ENCODE measurements at regions of chr10 and their contacts with region 1.

Region 1: DNA sequence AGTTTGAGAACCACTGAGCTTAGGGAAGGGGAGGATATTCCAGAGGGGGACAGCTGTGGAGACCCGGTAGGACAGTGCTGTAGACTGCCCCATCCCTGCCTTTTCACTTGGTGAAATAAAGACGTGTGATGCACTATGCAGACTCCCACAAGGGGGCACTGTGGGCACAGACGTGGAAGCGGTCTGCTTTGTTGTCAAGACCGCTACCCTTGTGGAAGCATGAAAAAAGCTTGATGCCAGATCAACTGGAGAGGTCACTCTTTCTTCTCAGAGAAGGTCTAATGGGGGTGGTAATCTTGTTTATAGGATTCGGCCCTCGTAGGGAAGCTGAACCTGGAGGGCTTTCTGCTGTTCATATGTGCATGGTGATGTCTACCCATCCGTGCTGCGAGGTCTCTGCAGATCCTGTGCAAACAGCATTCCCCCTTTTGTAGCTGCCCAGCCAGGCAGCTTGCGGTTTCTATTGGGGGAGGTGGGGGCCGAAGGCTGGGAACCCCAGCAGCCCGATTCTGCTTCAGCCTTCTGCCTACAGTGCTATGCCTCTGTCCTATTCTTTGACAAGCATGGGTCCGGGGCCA is 13.7 kb downstream of the RPS24 start:
- DNase-seq: peak; percentile 90
- H3K4me3 ChIP-seq: no peak overlapping the region
- H3K27ac ChIP-seq: peak overlapping the region; percentile 16
- H3K4me1 ChIP-seq: peaks cover 18% of the 10 kb centered on the region
- H3K27me3 ChIP-seq: no peaks in the 10 kb centered on the region
- CTCF ChIP-seq: peak; percentile 93

Region 2: DNA sequence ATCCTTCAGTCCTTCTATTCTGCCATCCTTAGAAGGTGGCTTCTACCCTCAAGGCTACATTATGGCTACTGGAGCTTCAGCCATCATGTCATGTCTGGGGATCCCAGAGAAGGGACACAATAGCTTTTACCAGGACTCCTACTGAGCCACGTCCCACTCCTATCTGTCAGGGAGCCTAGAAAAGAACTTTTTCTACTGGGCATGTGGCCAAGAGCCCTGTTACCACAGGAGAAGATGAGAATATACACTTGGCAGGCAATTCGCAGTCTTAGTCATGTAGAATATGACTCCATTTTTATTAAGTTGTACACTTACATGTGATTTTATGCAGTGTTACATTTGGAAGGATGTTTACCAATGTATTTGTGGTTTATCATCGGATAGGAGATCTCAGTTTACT is 345.2 kb before region 1 on chr10:
- CTCF ChIA-PET with region 1: no interaction called
- POLR2A ChIA-PET with region 1: no interaction called
- intact Hi-C with region 1: no loop called
- DNase-seq: peak; percentile 79
- H3K4me3 ChIP-seq: no peak overlapping the region
- H3K27ac ChIP-seq: no peak overlapping the region
- H3K4me1 ChIP-seq: no peaks in the 10 kb centered on the region
- H3K27me3 ChIP-seq: no peaks in the 10 kb centered on the region
- CTCF ChIP-seq: no peak

Region 3: DNA sequence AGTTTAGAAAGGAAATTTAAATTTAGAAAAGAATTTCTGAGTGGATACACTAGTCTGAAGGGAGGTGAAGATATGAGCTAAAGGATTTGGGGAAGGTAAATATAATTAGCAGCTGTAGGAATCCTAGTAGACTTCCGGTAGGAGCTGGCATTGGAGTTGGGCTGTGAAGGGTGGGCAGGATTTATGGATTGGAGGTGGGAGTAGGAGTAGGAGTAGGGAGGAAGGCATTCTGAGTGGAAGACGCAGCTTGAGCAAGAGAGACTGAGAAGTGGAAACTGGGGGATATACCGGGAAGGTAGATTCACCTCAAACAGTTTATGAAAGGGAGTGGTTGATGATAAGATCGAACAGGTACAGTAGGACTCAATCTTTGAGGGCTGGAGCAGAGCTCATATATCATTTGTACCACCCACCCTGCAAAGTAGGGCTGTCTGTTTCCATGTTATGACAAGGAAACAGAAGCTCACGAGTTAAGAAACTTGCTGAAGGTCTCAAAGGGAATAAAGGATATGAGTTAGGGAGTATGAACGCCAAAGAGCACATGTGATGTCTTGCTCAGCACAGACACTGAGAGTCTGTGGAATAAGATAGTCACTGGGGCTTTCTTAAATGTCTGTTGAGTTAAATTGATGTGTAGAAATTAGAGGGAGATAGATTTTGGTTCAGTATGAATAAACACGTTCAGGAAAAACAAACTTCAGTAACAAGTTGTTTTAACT is 67.9 kb after region 1 on chr10:
- CTCF ChIA-PET with region 1: no interaction called
- POLR2A ChIA-PET with region 1: no interaction called
- intact Hi-C with region 1: no loop called
- DNase-seq: no peak
- H3K4me3 ChIP-seq: no peak overlapping the region
- H3K27ac ChIP-seq: no peak overlapping the region
- H3K4me1 ChIP-seq: no peaks in the 10 kb centered on the region
- H3K27me3 ChIP-seq: peaks cover 4% of the 10 kb centered on the region
- CTCF ChIP-seq: no peak

Region 4: DNA sequence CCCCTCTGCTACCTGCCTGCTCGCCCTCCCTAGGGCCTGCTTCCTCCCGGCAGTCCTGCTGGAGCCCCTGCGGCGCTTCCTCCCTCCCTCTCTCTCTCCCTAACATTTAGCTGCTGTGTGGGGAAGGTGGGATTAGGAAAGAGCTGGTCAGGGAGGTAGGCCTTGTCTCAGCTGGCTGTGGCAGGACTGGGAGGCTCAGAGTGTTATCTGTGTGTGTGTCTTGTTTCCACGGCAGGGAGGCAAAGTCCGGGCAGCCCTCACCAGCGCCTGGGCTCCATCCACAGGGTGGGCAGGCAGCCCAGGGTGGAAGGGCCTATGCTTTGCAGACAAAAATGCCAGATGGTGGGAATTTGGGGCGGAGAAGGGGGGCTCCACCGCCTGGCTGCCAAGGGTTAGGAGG is 91.9 kb after region 1 on chr10:
- CTCF ChIA-PET with region 1: no interaction called
- POLR2A ChIA-PET with region 1: no interaction called
- intact Hi-C with region 1: loop called (anchors 10 kb)
- DNase-seq: no peak
- H3K4me3 ChIP-seq: no peak overlapping the region
- H3K27ac ChIP-seq: peak overlapping the region; percentile 25
- H3K4me1 ChIP-seq: peaks cover 6% of the 10 kb centered on the region
- H3K27me3 ChIP-seq: no peaks in the 10 kb centered on the region
- CTCF ChIP-seq: no peak

Region 5: GRCh38 chr10:78657163-78657861 is 609.9 kb after region 1 on chr10:
- CTCF ChIA-PET with region 1: interaction called, 10 read pairs
- POLR2A ChIA-PET with region 1: no interaction called
- intact Hi-C with region 1: no loop called
- DNase-seq: peak; percentile 72
- H3K4me3 ChIP-seq: no peak overlapping the region
- H3K27ac ChIP-seq: no peak overlapping the region
- H3K4me1 ChIP-seq: no peaks in the 10 kb centered on the region
- H3K27me3 ChIP-seq: peaks cover 11% of the 10 kb centered on the region
- CTCF ChIP-seq: peak; percentile 73

Region 6: GRCh38 chr10:79195091-79195923 is 1147.9 kb after region 1 on chr10:
- CTCF ChIA-PET with region 1: interaction called, 22 read pairs
- POLR2A ChIA-PET with region 1: no interaction called
- intact Hi-C with region 1: loop called (anchors 1 kb)
- DNase-seq: peak; percentile 85
- H3K4me3 ChIP-seq: no peak overlapping the region
- H3K27ac ChIP-seq: no peak overlapping the region
- H3K4me1 ChIP-seq: peaks cover 4% of the 10 kb centered on the region
- H3K27me3 ChIP-seq: no peaks in the 10 kb centered on the region
- CTCF ChIP-seq: peak; percentile 95

Measured in A673 (cell line).